HCT116 (cell line): ENCODE measurements at regions of chr9 and their contacts with region 1.

Region 1: DNA sequence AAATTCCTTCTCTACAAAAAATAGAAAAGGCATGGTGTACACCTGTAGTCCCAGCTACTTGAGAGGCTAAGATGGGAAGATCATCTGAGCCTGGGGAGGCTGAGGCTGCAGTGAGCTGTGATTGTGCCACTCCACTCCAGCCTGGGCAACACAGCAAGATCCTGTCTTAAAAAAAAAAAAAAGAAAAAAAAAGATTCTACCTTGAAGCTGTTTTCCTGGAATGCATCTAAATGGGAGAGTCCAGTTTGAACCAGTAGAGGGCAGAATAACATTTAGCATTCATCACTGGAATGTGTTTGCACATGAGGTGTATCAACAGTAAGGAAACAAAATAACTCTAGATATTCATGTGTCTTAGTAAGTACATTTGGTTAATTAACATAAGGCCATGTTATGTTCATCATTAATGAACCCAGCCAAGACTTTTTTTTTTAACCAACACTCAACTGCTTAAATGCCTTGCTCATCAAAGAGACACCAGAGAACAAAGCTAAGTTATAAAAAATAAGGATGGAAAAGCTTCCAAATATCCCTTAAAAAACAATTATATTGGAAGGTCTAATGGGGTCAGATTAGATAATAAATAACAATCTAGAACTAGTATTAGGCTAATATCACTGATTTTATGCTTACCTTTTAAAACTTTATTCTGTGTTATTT is 16.1 kb downstream of the IFNE start:
- DNase-seq: peak; percentile 61
- ATAC-seq: peak; percentile 89
- H3K4me3 ChIP-seq: no peak overlapping the region
- H3K27ac ChIP-seq: no peak overlapping the region
- H3K4me1 ChIP-seq: 0 out of 4 replicates have a peak, but pooled peaks cover 0 to 3% of the 10 kb centered on the region in 2 experiments
- H3K27me3 ChIP-seq: no peaks in the 10 kb centered on the region
- CTCF ChIP-seq: peak; percentile 71 to 75 (median 75); a peak in 5 of 6 replicates
- POLR2A ChIP-seq: no peak
- RAD21 ChIP-seq: peak; percentile 85

Region 2: DNA sequence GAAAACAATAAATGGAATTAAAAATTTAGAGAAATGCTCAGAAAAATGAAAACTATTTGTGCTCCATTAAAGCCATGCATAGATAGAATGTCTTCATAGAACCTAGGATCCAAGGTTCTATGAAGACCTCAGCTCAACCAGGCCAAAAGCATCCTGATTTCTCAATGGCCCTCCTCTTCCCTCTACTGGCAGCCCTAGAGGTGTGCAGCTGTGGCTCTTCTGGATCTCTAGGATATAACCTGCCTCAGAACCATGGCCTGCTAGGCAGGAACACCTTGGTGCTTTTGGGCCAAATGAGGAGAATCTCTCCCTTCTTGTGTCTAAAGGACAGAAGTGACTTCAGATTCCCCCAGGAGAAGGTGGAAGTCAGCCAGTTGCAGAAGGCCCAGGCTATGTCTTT is 10.7 kb before region 1 on chr9:
- CTCF ChIA-PET with region 1: interaction called, 11 read pairs
- POLR2A ChIA-PET with region 1: no interaction called
- RAD21 ChIA-PET with region 1: no interaction called
- intact Hi-C with region 1: no loop called
- DNase-seq: peak; percentile 23
- ATAC-seq: peak; percentile 99
- H3K4me3 ChIP-seq: no peak overlapping the region
- H3K27ac ChIP-seq: no peak overlapping the region
- H3K4me1 ChIP-seq: no peaks in the 10 kb centered on the region
- H3K27me3 ChIP-seq: no peaks in the 10 kb centered on the region
- CTCF ChIP-seq: peak; percentile 69 to 84 (median 77); a peak in 5 of 6 replicates
- POLR2A ChIP-seq: no peak
- RAD21 ChIP-seq: peak; percentile 81

Region 3: GRCh38 chr9:21516796-21517195 is 50.8 kb after region 1 on chr9:
- CTCF ChIA-PET with region 1: interaction called, 7 read pairs
- POLR2A ChIA-PET with region 1: interaction called, 3 read pairs
- RAD21 ChIA-PET with region 1: no interaction called
- intact Hi-C with region 1: loop called (anchors 5 kb)
- DNase-seq: no peak
- ATAC-seq: no peak
- H3K4me3 ChIP-seq: no peak overlapping the region
- H3K27ac ChIP-seq: peak overlapping the region; percentile 4; the same call in 1 of the 2 replicates
- H3K4me1 ChIP-seq: peaks cover 7 to 70% of the 10 kb centered on the region in 2 experiments; a peak in 3 of 4 replicates
- H3K27me3 ChIP-seq: no peaks in the 10 kb centered on the region
- CTCF ChIP-seq: no peak
- POLR2A ChIP-seq: no peak
- RAD21 ChIP-seq: no peak

Region 4: DNA sequence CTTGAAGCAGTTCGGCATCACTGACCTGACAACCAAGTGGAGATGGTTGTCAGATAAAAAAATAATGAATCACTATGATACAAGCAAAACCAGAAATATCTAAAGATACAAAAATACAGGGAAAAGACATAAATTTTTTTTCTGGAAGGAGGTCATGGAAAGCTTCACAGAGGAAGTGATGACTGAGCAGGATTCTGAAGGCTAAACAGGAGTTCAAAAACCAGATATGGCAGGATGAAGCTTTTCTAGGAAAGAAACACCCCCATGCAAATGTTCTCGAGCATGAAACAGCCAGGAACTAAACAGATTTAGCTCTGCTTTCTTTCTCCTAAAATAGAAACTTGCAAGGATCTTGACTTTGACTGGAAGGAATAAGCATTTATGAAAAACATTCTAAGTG is 76.8 kb after region 1 on chr9:
- CTCF ChIA-PET with region 1: no interaction called
- POLR2A ChIA-PET with region 1: no interaction called
- RAD21 ChIA-PET with region 1: no interaction called
- intact Hi-C with region 1: no loop called
- DNase-seq: no peak
- ATAC-seq: no peak
- H3K4me3 ChIP-seq: no peak overlapping the region
- H3K27ac ChIP-seq: peak overlapping the region; percentile 99; the same call in 1 of the 2 replicates
- H3K4me1 ChIP-seq: peaks cover 50 to 58% of the 10 kb centered on the region in 2 experiments
- H3K27me3 ChIP-seq: no peaks in the 10 kb centered on the region
- CTCF ChIP-seq: no peak
- POLR2A ChIP-seq: no peak
- RAD21 ChIP-seq: no peak